ENCODE measurements at regions of chr2 and their contacts with region 1.

Region 1: GRCh38 chr2:164737612-164738081 is 104.0 kb downstream of the COBLL1 start:
- DNase-seq: peak in 1 of 2 donors; percentile 76
- H3K4me3 ChIP-seq: peak overlapping the region in 1 of 2 donors; percentile 47
- H3K27ac ChIP-seq: no peak overlapping the region
- H3K4me1 ChIP-seq: peaks cover 4 to 17% of the 10 kb centered on the region in 2 donors
- H3K27me3 ChIP-seq: no peaks in the 10 kb centered on the region
- CTCF ChIP-seq: peak; percentile 63 to 81 (median 74)

Region 2: DNA sequence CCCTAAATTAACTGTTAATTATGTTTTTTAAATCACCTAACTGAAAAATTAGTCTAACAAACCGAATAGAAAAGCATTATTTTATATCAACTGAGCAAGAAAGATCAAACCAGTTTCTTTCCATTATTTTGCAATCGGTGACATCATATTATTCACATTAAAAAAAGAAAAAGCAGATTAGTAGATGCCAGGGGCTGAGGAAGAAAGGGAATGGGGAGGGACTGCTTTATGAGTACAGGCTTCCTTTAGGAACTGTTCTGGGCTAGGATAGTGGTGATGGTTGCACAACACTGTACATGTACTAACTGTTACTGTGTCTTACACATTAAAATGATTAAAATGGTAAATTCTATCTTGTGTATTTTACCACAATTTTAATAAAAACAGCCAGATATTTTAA is 44.7 kb after region 1 on chr2:
- intact Hi-C with region 1: loop called (anchors 2 kb)
- DNase-seq: peak in 1 of 2 donors; percentile 69
- H3K4me3 ChIP-seq: no peak overlapping the region
- H3K27ac ChIP-seq: peak overlapping the region; percentile 28 to 60
- H3K4me1 ChIP-seq: peaks cover 5 to 45% of the 10 kb centered on the region in 2 donors
- H3K27me3 ChIP-seq: no peaks in the 10 kb centered on the region
- CTCF ChIP-seq: no peak

Region 3: GRCh38 chr2:164917296-164917903 is 179.8 kb after region 1 on chr2:
- intact Hi-C with region 1: loop called (anchors 1 kb)
- DNase-seq: peak in 1 of 2 donors; percentile 69
- H3K4me3 ChIP-seq: no peak overlapping the region
- H3K27ac ChIP-seq: no peak overlapping the region
- H3K4me1 ChIP-seq: peaks cover 0 to 4% of the 10 kb centered on the region in 2 donors
- H3K27me3 ChIP-seq: no peaks in the 10 kb centered on the region
- CTCF ChIP-seq: peak; percentile 29 to 65 (median 41)

Region 4: GRCh38 chr2:165203689-165204559 is 466.3 kb after region 1 on chr2 and contains the start of gene SCN3A:
- intact Hi-C with region 1: loop called (anchors 10 kb)
- DNase-seq: no peak
- H3K4me3 ChIP-seq: peak within 1 kb of the TSS in 1 of 2 donors; percentile 21
- H3K27ac ChIP-seq: no peak within 1 kb of the TSS
- H3K4me1 ChIP-seq: no peaks in the 10 kb centered on the region
- H3K27me3 ChIP-seq: no peaks in the 10 kb centered on the region
- CTCF ChIP-seq: peak; percentile 6 to 64 (median 54)
- total RNA-seq, gene SCN3A: 1.4 TPM